ENCODE measurements at regions of chr1 and their contacts with region 1.

Region 1: DNA sequence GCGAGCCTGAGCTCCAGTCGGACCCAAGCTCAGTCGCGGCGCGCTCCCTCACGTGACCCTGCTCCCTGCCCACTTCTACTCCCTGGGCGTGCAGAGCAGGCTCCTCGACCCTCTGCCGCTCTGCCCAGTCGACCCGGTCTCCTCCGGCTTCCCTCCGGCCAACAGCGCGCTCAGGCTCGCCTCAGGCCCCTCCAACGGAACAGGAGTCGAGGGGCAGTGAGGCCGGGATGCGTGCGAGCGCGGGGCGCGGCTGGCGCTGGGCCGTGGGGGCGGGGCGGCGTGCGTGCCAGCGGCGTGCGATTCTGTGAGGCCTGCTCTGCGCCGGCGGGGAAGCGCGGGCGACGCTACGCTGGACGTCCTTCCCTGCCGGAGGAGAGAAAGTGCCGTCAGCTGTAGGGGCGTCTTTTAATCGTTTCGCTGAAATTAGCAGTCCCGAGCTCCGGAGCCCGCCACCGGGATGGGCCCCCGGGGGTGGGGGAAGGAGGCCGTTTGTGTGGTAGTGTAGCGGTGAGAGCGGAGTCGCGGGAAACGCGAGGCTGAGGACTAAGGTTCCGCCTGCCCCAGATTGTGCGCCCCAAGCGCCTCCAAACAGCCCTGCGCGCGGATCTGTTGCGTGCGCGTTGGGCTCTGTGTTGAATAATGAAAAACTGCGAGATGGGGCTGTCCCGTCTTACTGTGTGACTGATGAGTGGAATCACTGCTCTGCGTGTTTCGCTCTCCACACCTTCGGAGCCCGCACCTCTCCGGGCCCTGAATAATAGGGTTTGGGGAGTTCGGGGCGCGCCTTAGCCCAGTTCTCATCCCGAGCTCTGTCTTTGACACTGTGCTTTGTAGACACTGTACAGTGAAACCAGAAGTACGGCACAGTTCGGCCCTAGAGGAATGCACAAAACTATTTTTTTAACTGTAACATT is at the start of gene ACBD6:
- DNase-seq: peak; percentile 91
- H3K4me3 ChIP-seq: peak within 1 kb of the TSS; percentile 87
- H3K27ac ChIP-seq: peak within 1 kb of the TSS; percentile 74
- H3K4me1 ChIP-seq: peaks cover 29% of the 10 kb centered on the region
- CTCF ChIP-seq: peak; percentile 44
- total RNA-seq, gene ACBD6: 69.3 and 78.4 TPM in 2 replicates

Region 2: GRCh38 chr1:179882243-179883039 is 620.2 kb before region 1 on chr1 and contains the start of gene TOR1AIP1:
- CTCF ChIA-PET with region 1: no interaction called
- POLR2A ChIA-PET with region 1: no interaction called
- intact Hi-C with region 1: loop called (anchors 5 kb)
- DNase-seq: peak; percentile 99
- H3K4me3 ChIP-seq: peak within 1 kb of the TSS; percentile 79
- H3K27ac ChIP-seq: peak within 1 kb of the TSS; percentile 96
- H3K4me1 ChIP-seq: peaks cover 29% of the 10 kb centered on the region
- CTCF ChIP-seq: peak; percentile 58
- total RNA-seq, gene TOR1AIP1: 11.0 and 12.1 TPM in 2 replicates

Region 3: GRCh38 chr1:180252638-180253536 is 249.7 kb before region 1 on chr1:
- CTCF ChIA-PET with region 1: no interaction called
- POLR2A ChIA-PET with region 1: no interaction called
- intact Hi-C with region 1: no loop called
- DNase-seq: peak; percentile 63
- H3K4me3 ChIP-seq: no peak overlapping the region
- H3K27ac ChIP-seq: no peak overlapping the region
- H3K4me1 ChIP-seq: no peaks in the 10 kb centered on the region
- CTCF ChIP-seq: peak; percentile 94

Region 4: GRCh38 chr1:180515864-180516388 is 13.3 kb after region 1 on chr1:
- CTCF ChIA-PET with region 1: interaction called, 3 read pairs
- POLR2A ChIA-PET with region 1: interaction called, 18 read pairs
- intact Hi-C with region 1: no loop called
- DNase-seq: peak; percentile 74
- H3K4me3 ChIP-seq: no peak overlapping the region
- H3K27ac ChIP-seq: no peak overlapping the region
- H3K4me1 ChIP-seq: no peaks in the 10 kb centered on the region
- CTCF ChIP-seq: peak; percentile 88

Region 5: DNA sequence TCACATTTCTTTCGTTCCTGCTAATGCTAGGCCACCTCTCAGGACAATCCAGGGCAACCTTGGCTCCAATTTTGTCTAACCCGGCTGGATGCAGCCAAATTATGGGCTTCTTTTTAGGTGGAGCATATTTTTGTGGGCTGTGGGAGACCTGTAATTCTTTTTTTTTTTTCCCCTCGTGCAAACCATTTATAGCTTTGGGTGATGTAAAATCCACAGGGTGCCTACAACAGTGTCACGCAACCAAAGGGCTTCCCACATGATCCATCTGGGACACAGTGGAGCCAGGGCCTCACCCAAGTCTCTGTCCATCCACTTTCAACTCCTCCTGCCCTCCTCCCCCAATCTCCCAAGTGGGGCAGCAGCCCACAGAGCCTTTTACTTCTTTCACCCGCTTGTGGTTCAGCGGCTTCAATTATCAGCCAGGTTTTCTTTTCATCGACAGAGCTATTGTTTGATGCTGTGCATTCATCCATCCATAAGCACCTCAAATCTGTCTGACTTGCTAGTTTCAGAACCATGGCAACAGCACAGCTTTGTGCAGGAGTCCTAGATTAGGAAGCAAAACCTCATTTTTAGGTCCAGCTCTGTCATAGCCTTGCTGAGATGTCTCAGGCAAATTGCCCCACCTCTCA is 46.2 kb after region 1 on chr1:
- CTCF ChIA-PET with region 1: no interaction called
- POLR2A ChIA-PET with region 1: no interaction called
- intact Hi-C with region 1: no loop called
- DNase-seq: no peak
- H3K4me3 ChIP-seq: no peak overlapping the region
- H3K27ac ChIP-seq: no peak overlapping the region
- H3K4me1 ChIP-seq: no peaks in the 10 kb centered on the region
- CTCF ChIP-seq: no peak

Region 6: DNA sequence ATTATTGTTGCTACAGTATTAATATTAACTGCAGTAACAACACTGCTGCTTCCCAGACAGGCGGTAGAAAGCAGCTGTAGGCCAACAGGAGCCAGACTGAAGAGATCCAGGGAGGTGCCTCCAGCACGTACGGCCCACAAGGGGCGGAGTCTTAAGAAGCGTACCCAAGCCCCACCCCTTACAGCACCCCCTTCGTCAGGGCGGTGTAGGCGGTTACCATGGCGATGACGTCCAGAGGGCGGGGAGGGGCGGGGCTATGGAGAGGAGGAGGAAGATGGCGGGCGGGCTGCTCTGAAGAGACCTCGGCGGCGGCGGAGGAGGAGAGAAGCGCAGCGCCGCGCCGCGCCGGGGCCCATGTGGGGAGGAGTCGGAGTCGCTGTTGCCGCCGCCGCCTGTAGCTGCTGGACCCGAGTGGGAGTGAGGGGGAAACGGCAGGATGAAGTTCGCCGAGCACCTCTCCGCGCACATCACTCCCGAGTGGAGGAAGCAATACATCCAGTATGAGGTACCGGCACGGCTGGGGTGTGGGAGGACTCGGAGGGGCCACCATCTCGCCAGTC is 129.2 kb after region 1 on chr1 and contains the start of gene XPR1:
- CTCF ChIA-PET with region 1: no interaction called
- POLR2A ChIA-PET with region 1: interaction called, 5 read pairs
- intact Hi-C with region 1: loop called (anchors 1 kb)
- DNase-seq: peak; percentile 99
- H3K4me3 ChIP-seq: peak within 1 kb of the TSS; percentile 82
- H3K27ac ChIP-seq: peak within 1 kb of the TSS; percentile 76
- H3K4me1 ChIP-seq: peaks cover 25% of the 10 kb centered on the region
- CTCF ChIP-seq: peak; percentile 43; the same call in 1 of the 2 replicates
- total RNA-seq, gene XPR1: 8.6 and 9.0 TPM in 2 replicates

Measured in OCI-LY7 (cell line).